ENCODE measurements at regions of chr4 and their contacts with region 1.

Region 1: DNA sequence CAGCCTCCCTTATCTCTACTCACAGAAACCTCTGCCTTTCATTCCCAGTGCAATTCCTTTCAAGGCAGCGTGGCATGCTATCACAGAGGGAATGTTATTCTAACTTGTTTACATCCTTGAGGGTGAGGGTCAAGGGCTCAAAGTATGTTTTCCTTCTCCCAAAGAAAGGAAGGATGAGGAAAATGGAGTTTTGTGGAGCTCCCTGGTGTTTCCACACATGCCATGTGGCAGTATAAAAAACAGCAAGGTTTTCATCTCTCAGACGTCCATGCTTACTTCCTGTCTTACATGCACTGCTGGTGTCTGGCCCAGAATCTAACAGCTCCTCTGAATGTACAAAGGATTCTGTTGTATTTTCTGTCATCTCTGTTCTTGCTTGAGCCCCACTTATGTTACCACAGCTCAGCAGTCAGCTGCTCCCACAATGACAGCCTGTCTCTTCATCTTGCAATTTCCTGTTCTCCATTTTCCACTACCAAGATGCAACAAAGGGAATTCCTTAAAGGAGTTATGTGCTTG is 128.0 kb downstream of the SNCA start:
- DNase-seq: no peak
- H3K4me3 ChIP-seq: no peak overlapping the region
- H3K27ac ChIP-seq: peak overlapping the region; percentile 25 to 61
- H3K4me1 ChIP-seq: peaks cover 0 to 4% of the 10 kb centered on the region in 2 donors
- H3K27me3 ChIP-seq: no peaks in the 10 kb centered on the region
- CTCF ChIP-seq: no peak
- POLR2A ChIP-seq: no peak

Region 2: DNA sequence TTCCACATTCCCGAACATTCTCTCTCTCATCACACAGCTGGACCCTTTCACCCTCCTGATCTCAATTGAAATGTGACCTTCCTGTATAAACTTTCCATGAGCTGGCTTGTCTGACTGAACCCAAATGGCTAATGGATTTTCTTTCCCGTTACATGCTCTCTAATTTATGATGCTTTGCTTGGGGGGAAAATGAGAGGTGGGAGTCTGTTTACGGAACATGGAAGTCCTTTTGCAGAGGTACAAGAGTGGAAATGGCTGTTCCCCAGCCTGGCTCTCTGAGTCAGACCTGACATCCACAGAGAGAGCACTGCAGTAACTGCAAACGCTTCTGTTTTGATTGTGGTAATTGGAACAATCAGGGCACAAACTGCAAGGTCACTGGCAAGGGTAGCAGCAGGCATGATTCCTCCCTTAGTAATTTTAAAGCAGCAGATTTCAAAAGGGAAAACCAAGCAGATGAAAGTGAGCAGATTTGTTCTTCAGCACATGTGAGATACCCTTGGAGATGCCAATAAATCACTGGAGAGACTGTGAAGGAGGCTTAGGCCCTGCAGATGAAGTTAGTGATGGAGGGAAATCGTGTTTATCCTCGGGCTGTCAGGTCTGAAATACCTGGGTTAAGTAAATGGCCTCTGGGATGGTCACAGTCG is 44.1 kb after region 1 on chr4:
- intact Hi-C with region 1: loop called (anchors 5 kb)
- DNase-seq: peak; percentile 48 to 70
- H3K4me3 ChIP-seq: no peak overlapping the region
- H3K27ac ChIP-seq: peak overlapping the region; percentile 83 to 85
- H3K4me1 ChIP-seq: no peaks in the 10 kb centered on the region
- H3K27me3 ChIP-seq: no peaks in the 10 kb centered on the region
- CTCF ChIP-seq: no peak
- POLR2A ChIP-seq: no peak

Measured in uterus (tissue), 4 donors.